GM12878 (cell line): ENCODE measurements at regions of chr15 and their contacts with region 1.

Region 1: DNA sequence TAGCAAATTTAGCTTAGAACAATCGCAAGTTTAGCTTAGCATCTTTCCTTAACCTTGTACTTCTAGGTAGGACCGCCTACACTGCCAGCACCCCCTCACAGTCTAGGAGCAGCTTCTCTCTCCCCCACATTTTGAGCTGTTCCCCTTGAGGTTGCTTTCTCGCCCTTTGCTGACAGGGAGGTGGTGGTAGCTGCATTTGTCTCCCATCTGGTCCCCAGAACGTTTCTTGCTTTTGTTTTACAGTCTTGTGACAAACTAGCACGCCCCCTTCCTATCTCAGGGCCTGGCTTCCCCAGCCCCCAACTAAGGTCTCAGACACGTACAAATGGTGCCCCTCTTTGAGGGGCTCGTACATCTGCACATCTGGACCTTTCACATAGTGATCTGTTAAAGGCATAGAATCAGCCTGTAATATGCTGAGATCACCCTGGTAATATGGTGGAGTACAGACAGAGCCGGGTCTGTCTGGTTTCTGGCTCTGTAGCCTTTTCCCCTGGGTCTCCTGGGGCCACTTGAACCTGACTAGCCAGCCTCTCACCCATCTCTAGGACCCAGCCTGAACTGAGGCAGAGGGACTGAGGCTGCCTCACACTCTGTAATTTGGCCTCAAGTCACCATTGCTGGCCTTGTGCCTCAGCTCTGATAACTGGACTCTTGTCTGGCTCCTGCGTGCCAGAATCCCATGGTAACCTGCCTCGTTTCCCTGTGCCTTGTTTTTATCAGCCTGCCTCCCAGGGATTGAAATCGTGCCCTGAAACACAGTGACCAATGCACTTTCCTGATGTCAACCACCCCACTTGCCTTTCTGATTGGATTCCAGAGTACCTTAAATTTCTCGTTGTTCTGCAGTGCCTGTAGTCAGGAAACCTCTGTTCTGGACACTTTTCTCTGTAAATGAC is 27.7 kb downstream of the CRTC3 start:
- DNase-seq: no peak
- ATAC-seq: peak; percentile 39
- H3K4me3 ChIP-seq: no peak overlapping the region
- H3K27ac ChIP-seq: peak overlapping the region; percentile 80
- H3K4me1 ChIP-seq: peaks cover 22% of the 10 kb centered on the region
- H3K27me3 ChIP-seq: no peaks in the 10 kb centered on the region
- CTCF ChIP-seq: no peak
- EP300 ChIP-seq: no peak
- POLR2A ChIP-seq: peak; percentile 53
- RAD21 ChIP-seq: no peak

Region 2: DNA sequence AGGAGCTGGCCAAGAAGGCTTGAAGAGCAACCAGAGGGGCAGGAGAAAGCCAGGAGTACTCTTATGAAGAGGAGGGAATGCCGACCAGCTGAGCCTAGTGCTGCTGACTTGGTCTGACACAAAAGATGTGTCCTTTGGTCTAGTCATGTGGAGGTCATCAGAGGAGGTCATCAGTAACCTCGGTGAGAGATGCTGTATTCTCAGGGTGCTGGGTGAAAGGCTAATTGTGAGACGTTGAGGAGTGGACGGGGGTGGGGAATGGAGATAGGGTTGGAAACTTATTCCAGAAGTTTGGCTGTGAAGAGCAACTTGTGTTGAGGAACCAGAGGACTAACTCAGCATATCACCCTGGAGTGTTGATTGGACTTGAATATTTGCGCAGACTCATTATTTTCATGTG is 22.2 kb before region 1 on chr15:
- CTCF ChIA-PET with region 1: interaction called, 5 read pairs
- POLR2A ChIA-PET with region 1: interaction called, 8 read pairs
- RAD21 ChIA-PET with region 1: interaction called, 5 read pairs
- SMC1A ChIA-PET with region 1: interaction called, 15 read pairs
- in situ Hi-C with region 1: no loop called
- intact Hi-C with region 1: no loop called
- DNase-seq: no peak
- ATAC-seq: no peak
- H3K4me3 ChIP-seq: no peak overlapping the region
- H3K27ac ChIP-seq: no peak overlapping the region
- H3K4me1 ChIP-seq: 0 out of 2 replicates have a peak, but pooled peaks cover 4% of the 10 kb centered on the region
- H3K27me3 ChIP-seq: no peaks in the 10 kb centered on the region
- CTCF ChIP-seq: no peak
- EP300 ChIP-seq: no peak
- POLR2A ChIP-seq: no peak
- RAD21 ChIP-seq: no peak

Region 3: GRCh38 chr15:90571063-90571541 is 13.7 kb after region 1 on chr15:
- CTCF ChIA-PET with region 1: interaction called, 8 read pairs
- POLR2A ChIA-PET with region 1: interaction called, 17 read pairs
- RAD21 ChIA-PET with region 1: interaction called, 18 read pairs
- SMC1A ChIA-PET with region 1: interaction called, 32 read pairs
- in situ Hi-C with region 1: no loop called
- intact Hi-C with region 1: no loop called
- DNase-seq: no peak
- ATAC-seq: peak; percentile 83
- H3K4me3 ChIP-seq: peak overlapping the region; percentile 3; the same call in 1 of the 2 replicates
- H3K27ac ChIP-seq: peak overlapping the region; percentile 61
- H3K4me1 ChIP-seq: peaks cover 32% of the 10 kb centered on the region
- H3K27me3 ChIP-seq: no peaks in the 10 kb centered on the region
- CTCF ChIP-seq: no peak
- EP300 ChIP-seq: no peak
- POLR2A ChIP-seq: no peak
- RAD21 ChIP-seq: no peak

Region 4: DNA sequence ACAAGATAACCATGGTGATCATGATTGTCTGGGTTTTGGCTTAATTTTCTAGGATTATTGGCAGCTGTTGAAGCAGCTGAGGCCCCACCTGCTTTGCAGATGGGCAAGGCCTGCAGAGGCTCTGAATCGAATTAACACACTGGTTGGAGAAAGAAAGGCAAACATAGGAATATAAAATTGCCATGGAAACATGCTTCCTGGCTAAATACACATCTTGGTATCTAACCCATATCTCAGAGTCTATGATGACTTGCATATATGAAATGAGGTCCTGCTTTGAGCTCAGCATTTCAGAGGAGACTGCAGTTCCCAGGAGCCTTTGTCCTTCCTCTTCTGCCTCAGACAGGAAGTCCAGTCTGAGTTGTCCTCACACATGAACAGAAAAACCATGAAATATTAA is 518.3 kb after region 1 on chr15:
- CTCF ChIA-PET with region 1: no interaction called
- POLR2A ChIA-PET with region 1: no interaction called
- RAD21 ChIA-PET with region 1: no interaction called
- SMC1A ChIA-PET with region 1: no interaction called
- in situ Hi-C with region 1: no loop called
- intact Hi-C with region 1: no loop called
- DNase-seq: no peak
- ATAC-seq: no peak
- H3K4me3 ChIP-seq: no peak overlapping the region
- H3K27ac ChIP-seq: no peak overlapping the region
- H3K4me1 ChIP-seq: no peaks in the 10 kb centered on the region
- H3K27me3 ChIP-seq: no peaks in the 10 kb centered on the region
- CTCF ChIP-seq: no peak
- EP300 ChIP-seq: no peak
- POLR2A ChIP-seq: no peak
- RAD21 ChIP-seq: no peak